OCI-LY7 (cell line): ENCODE measurements at regions of chr7 and their contacts with region 1.

Region 1: DNA sequence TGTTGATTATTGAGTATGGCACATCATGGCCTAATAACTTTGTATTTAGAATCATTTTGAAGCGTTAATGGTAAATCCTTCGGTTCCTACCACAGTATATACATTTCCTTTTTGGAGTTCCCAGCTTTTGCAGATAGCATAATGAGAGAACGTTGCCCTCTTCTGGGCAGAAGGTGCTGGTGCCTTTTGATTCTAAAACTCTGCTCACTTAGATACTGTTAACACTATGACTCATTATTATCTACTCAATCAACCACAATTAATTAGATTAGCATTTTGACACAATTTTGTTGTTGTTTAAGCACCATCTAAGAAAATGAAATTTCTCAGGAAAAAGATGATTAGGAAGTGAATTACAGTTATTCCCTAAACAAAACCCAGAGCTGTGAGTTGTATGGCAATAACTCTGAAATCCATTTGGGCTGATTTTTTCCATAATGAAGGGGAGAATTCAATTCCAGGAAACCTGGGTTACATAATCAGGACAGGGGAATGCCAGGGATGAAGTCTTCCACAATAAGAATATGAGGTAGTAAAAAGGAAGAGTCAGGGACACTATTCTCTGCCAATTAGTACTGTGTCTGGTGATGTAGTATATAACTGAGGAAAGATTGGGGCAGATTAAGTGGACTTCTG is 11.5 kb upstream of the DLD start:
- DNase-seq: peak; percentile 63
- H3K4me3 ChIP-seq: no peak overlapping the region
- H3K27ac ChIP-seq: no peak overlapping the region
- H3K4me1 ChIP-seq: no peaks in the 10 kb centered on the region
- CTCF ChIP-seq: peak; percentile 97

Region 2: GRCh38 chr7:106793015-106793975 is 1086.2 kb before region 1 on chr7:
- CTCF ChIA-PET with region 1: no interaction called
- POLR2A ChIA-PET with region 1: no interaction called
- intact Hi-C with region 1: loop called (anchors 5 kb)
- DNase-seq: peak; percentile 70
- H3K4me3 ChIP-seq: no peak overlapping the region
- H3K27ac ChIP-seq: no peak overlapping the region
- H3K4me1 ChIP-seq: no peaks in the 10 kb centered on the region
- CTCF ChIP-seq: peak; percentile 96

Region 3: DNA sequence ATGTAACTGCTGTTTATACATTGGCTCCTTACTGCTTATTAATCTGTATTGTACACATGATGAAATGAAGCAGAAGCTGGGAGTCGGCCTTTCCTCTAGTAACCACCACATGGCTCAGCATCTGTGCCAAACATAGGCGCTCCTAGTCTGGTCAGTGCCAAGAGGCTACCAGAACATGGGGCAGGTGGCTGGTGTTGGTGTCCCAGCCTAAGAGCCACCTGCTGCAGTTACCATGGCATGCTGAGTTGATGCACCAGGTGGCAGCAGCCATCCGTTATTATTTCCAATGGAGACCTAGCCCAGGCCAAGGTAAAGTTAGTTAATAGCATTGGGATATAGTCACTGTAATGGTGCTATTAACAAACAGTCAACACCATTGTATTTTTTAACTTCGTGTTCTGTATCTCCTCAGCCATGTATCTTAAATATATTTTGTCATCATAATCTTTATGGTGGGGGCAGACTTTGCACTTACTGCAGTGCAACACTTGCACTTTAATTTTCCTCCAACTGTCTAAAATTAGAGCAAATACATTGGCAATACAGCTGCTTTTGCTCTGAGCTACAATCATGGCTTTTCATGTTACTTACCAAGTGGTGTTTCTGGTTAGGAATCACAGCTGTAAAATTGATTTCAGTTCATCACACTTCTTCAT is 677.6 kb before region 1 on chr7:
- CTCF ChIA-PET with region 1: no interaction called
- POLR2A ChIA-PET with region 1: no interaction called
- intact Hi-C with region 1: loop called (anchors 2 kb)
- DNase-seq: peak; percentile 61
- H3K4me3 ChIP-seq: no peak overlapping the region
- H3K27ac ChIP-seq: no peak overlapping the region
- H3K4me1 ChIP-seq: no peaks in the 10 kb centered on the region
- CTCF ChIP-seq: peak; percentile 84

Region 4: DNA sequence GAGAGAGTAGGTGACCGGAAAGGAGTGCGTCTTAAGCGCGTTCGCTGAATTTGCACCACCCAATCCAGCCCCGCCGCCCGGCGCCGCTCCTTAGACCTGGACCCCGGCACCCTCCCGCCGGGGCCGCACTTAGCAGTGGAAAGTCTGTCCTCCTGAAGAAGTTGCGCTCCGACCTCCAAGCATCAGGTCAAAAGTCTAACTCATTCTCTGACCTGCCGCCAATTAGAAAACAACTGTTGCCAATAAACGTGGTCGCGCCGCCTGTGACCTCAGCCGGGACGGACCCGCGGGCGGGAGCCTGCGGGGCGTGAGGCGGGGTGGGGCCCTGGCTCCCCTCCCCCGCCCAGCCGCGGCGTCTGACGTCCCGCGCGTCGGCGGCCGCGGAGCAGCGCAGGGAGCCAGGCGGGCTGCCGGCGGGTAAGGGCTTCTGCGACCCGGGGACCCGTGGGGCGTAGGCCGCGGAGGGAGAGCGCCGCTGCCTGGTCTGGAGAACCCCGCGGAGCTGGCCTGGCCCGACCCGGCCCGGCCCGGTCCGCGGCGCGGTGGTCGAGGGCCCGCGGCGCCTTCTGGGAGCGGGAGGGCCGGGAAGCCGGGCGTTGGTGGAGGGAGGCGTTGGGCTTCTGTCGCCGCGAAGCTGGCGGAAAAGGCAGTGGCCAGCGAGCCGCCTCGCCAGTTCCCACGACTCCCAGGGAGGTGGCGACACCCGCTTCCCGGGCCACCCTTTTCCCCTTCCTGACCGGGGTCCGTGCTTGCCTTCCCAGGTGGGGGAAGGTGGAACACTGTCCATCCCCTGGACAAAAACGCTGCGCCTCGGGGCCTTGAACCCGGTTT is 299.4 kb before region 1 on chr7 and contains the start of gene BCAP29:
- CTCF ChIA-PET with region 1: no interaction called
- POLR2A ChIA-PET with region 1: no interaction called
- intact Hi-C with region 1: loop called (anchors 10 kb)
- DNase-seq: peak; percentile 82
- H3K4me3 ChIP-seq: peak within 1 kb of the TSS; percentile 85
- H3K27ac ChIP-seq: peak within 1 kb of the TSS; percentile 45
- H3K4me1 ChIP-seq: peaks cover 18% of the 10 kb centered on the region
- CTCF ChIP-seq: peak; percentile 39
- total RNA-seq, gene BCAP29: 18.7 and 26.5 TPM in 2 replicates

Region 5: DNA sequence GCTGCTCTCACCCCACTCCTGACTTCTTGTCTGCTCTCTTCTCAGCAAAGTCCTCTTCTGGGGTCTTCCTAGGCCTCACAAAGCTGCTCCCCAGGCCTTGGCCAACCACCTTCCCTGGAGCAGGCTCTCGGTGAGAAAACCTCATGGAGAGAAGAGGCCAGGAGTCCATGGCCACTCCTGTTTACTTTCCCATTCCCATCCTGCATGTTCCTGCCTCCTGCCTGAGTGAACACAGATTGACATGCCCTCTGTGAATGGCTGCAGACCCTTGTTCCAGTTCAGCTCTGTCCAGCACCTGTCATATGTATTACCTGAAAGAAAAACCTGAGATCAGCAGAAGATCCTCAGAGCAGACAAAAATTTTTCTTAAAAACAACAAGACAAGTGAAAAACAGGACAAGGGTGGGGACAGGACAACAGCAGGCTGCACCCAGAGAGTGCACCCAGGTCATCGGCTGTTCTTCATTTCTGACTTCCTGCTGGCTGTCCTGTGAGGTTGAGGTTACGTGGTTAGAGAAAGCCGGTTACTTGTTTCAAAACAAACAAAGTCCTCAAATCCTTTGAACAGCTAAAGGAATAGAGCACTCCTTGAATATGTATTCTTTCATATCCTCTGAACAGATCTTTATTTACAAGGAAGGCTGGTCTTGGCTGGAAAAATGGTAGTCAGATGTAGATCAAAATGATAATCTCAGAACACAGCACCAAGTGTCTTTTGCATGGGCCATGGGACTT is 22.5 kb before region 1 on chr7:
- CTCF ChIA-PET with region 1: no interaction called
- POLR2A ChIA-PET with region 1: no interaction called
- intact Hi-C with region 1: no loop called
- DNase-seq: no peak
- H3K4me3 ChIP-seq: no peak overlapping the region
- H3K27ac ChIP-seq: no peak overlapping the region
- H3K4me1 ChIP-seq: no peaks in the 10 kb centered on the region
- CTCF ChIP-seq: no peak

Region 6: DNA sequence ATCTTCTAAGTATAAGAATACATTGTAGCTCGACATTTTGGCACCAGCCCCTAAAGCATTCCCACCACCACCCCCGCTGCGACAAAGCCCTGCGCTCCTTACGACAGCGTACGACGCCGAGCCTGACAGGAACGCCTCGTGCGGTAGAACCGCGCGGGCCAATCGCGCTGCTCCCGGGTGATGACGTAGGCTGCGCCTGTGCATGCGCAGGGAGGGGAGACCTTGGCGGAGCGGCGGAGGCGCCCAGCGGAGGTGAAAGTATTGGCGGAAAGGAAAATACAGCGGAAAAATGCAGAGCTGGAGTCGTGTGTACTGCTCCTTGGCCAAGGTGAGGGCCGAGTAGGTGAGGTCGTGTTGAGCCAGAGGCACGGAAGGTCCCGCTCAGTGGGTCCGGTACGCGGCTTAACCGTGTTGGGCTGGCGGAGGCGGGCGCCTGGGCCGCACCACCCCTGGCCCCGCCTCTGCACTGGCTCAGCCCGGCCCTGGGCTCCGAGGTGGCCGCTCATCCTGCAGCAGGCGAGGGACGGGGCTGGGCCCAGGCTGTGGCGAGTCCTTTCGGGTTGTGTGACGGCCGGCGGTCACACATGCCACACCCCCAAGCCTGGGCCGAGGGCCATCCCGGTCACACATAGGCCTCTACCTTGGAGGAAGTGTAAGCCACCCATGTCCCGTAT is 11.6 kb after region 1 on chr7 and contains the start of gene DLD:
- CTCF ChIA-PET with region 1: interaction called, 3 read pairs
- POLR2A ChIA-PET with region 1: interaction called, 17 read pairs
- intact Hi-C with region 1: no loop called
- DNase-seq: peak; percentile 93
- H3K4me3 ChIP-seq: peak within 1 kb of the TSS; percentile 82
- H3K27ac ChIP-seq: peak within 1 kb of the TSS; percentile 33
- H3K4me1 ChIP-seq: peaks cover 30% of the 10 kb centered on the region
- CTCF ChIP-seq: no peak
- total RNA-seq, gene DLD: 43.8 and 48.4 TPM in 2 replicates

Region 7: DNA sequence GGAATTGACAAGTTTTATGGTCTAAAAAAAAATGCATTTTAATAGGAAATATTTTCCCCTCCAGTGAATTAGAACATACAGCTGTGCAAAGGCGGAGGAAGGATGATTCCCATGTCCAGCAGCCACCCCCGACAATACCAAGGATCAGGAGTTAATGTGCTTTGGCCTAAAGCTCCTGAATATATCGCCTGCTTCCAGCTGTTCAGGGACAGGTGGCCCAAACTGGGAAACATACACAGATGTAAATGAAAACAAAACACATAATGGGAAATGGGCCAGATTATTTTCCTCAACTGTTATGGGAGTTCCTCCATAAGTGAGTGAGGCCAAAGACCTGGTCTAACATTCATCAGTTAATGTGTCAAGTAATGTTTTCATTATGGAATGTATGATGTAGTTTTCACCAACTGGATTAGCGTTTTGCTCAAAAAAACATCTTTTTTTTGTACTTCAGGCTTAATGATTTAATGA is 178.5 kb after region 1 on chr7:
- CTCF ChIA-PET with region 1: no interaction called
- POLR2A ChIA-PET with region 1: no interaction called
- intact Hi-C with region 1: no loop called
- DNase-seq: no peak
- H3K4me3 ChIP-seq: no peak overlapping the region
- H3K27ac ChIP-seq: no peak overlapping the region
- H3K4me1 ChIP-seq: no peaks in the 10 kb centered on the region
- CTCF ChIP-seq: no peak